ENCODE measurements at regions of chr18 and their contacts with region 1.

Region 1: GRCh38 chr18:58529714-58530354 is 99.1 kb downstream of the ALPK2 start:
- DNase-seq: peak in 2 of 3 donors; percentile 66 to 74
- ATAC-seq: peak; percentile 77 to 84 (median 84)
- H3K4me3 ChIP-seq: no peak overlapping the region
- H3K27ac ChIP-seq: no peak overlapping the region
- H3K4me1 ChIP-seq: peaks cover 0 to 13% (median 6%) of the 10 kb centered on the region in 4 donors
- H3K27me3 ChIP-seq: no peaks in the 10 kb centered on the region
- CTCF ChIP-seq: peak; percentile 80 to 92 (median 82)
- POLR2A ChIP-seq: no peak

Region 2: DNA sequence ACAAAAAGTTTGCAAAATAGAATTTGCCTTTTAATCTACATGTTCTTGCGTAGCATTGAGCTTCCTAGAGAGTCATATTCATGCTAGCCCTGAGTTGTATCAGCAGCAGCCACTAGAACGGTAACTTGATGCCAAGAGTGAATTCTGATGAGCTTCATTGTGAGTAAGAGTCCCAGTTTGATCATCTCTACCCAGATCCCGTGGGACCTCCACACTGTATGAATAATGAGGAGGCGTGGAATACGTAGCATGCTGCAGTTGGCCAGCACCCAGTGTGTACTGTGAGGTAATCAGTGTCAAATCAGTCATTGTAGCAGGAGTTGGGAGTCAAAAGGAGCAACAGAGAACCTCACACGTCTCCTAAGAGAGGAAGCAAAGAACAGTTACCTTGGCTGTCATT is 288.0 kb before region 1 on chr18:
- intact Hi-C with region 1: no loop called
- DNase-seq: no peak
- ATAC-seq: peak in 1 of 4 donors; percentile 37
- H3K4me3 ChIP-seq: no peak overlapping the region
- H3K27ac ChIP-seq: no peak overlapping the region
- H3K4me1 ChIP-seq: peaks cover 0 to 5% (median 0%) of the 10 kb centered on the region in 4 donors
- H3K27me3 ChIP-seq: no peaks in the 10 kb centered on the region
- CTCF ChIP-seq: no peak
- POLR2A ChIP-seq: no peak

Region 3: DNA sequence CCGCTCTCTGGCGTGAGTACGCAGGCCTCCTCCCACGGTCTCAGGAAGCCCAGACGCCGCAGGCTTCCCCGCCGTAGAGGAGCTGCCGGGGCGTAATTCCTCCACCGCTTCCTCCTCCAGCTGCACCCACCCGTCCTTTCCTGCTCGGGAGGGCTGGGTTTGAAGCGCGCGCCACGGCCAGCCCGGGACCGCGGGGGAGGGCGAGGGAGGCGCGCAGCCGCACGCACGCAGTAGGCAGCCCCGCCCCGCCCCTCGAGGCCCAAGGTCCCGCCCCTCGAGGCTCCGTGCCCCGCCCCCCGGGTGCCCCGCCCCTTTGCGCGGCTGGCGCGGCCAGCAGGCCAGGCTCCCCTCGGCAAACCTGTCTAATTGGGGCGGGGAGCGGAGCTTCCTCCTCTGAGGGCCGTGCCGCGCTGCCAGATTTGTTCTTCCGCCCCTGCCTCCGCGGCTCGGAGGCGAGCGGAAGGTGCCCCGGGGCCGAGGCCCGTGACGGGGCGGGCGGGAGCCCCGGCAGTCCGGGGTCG is 141.3 kb after region 1 on chr18 and contains the start of gene MALT1:
- intact Hi-C with region 1: loop called in 1 of 2 experiments (anchors 10 kb)
- DNase-seq: peak; percentile 96 to 98 (median 97)
- ATAC-seq: peak; percentile 94 to 99 (median 97)
- H3K4me3 ChIP-seq: peak within 1 kb of the TSS; percentile 62 to 94 (median 77)
- H3K27ac ChIP-seq: peak within 1 kb of the TSS; percentile 87 to 98 (median 94)
- H3K4me1 ChIP-seq: peaks cover 0 to 26% (median 9%) of the 10 kb centered on the region in 4 donors
- H3K27me3 ChIP-seq: no peaks in the 10 kb centered on the region
- CTCF ChIP-seq: no peak
- POLR2A ChIP-seq: peak; percentile 98
- total RNA-seq, gene MALT1: 9.2 to 16.0 (median 10.2) TPM

Region 4: DNA sequence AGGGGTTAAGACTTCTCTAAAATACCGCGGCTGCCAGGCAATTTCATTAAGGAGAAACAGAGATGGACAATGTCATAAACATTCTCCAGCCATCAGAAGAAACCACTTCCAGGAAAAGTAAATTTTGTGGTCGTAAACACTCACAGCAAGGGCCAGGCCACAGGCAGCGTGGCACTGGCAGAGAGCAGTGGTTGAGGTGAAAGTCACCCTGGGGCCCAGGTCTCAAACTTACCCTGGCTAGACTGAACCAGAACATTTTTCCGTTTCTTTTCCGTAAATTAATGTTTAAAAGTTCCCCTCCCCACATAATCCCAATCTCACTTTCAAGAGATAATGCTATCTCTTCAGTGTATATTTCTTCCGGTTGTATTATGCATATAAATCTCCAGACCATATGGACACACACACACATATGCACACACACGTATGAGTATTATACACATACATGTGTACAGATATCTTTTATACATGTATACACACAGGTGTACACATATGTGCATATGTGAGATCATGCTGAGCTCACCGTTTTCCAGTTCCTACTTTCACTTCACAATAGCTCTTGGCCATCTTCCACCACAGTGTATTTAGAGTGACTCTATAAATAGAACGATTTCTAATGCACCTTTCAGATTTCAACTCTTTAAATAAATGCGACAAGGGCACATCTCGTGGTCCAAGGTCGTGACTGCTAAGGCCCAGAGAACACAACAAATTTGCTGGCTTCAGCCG is 231.6 kb after region 1 on chr18:
- intact Hi-C with region 1: loop called (anchors 5 to 10 kb)
- DNase-seq: no peak
- ATAC-seq: peak; percentile 21 to 67 (median 48)
- H3K4me3 ChIP-seq: no peak overlapping the region
- H3K27ac ChIP-seq: no peak overlapping the region
- H3K4me1 ChIP-seq: peaks cover 0 to 9% (median 0%) of the 10 kb centered on the region in 4 donors
- H3K27me3 ChIP-seq: no peaks in the 10 kb centered on the region
- CTCF ChIP-seq: no peak
- POLR2A ChIP-seq: no peak

Region 5: DNA sequence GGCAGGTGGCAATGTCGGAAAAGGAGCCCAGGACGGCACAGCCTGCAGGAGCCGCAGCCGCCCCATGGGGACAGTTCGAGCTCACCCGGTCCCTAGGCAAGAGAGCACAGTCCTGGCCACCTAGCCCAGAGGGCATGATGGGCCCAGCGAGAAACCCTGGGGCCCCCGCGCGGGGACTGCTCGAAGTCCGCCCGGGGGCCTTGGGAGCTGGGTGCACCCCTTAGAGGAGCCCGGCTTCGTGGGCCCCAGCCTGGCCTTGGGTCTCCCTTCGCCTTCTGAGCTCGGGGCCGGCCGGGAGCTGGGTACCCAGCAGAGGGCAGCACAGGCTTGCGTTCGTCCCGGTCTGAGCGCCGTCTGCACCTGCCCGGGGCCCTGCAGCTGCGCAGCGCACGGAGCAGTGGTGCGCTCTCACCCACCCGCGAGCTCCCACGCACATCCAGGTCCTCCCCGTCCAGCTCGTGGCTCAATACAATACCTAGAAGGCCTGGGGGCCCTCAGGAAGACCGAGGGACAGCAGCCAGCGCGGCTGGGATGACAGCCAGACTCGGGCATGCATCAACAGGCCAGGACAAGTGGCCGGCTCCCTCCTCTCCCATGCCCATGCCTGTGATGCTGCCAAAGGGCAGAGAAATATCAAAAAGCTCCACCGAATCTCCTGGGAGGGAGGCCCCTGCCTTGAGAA is 238.6 kb after region 1 on chr18:
- intact Hi-C with region 1: loop called (anchors 5 to 10 kb)
- DNase-seq: peak; percentile 76 to 79 (median 77)
- ATAC-seq: peak; percentile 95 to 97 (median 96)
- H3K4me3 ChIP-seq: peak overlapping the region; percentile 14 to 38 (median 17)
- H3K27ac ChIP-seq: no peak overlapping the region
- H3K4me1 ChIP-seq: peaks cover 0 to 8% (median 2%) of the 10 kb centered on the region in 4 donors
- H3K27me3 ChIP-seq: no peaks in the 10 kb centered on the region
- CTCF ChIP-seq: peak; percentile 76 to 92 (median 84)
- POLR2A ChIP-seq: no peak